HCT116 (cell line): ENCODE measurements at regions of chr4 and their contacts with region 1.

Region 1: DNA sequence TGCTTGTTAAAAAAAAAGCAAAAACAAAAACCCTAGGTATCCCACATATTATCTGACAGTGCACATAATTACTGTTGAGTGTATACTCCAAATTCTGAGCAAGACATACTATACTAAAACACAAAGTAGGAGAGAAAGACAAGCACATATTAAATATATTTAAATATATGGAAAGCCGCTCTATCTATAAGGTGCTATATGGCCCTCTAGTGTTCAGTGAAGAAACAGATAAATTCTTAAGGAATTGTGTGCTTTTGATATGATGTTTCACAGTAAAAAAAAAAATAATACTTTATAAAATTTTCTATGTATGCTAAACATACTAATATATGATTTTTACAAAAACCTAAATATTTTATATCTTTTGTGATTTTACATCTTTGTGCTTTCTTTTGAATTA is 137.8 kb downstream of the FBXW7 start:
- DNase-seq: no peak
- ATAC-seq: no peak
- H3K4me3 ChIP-seq: no peak overlapping the region
- H3K27ac ChIP-seq: no peak overlapping the region
- H3K4me1 ChIP-seq: no peaks in the 10 kb centered on the region
- H3K27me3 ChIP-seq: no peaks in the 10 kb centered on the region
- CTCF ChIP-seq: peak; percentile 29 to 40 (median 37); a peak in 4 of 6 replicates
- POLR2A ChIP-seq: no peak
- RAD21 ChIP-seq: peak; percentile 47

Region 2: GRCh38 chr4:151530783-151531182 is 867.3 kb before region 1 on chr4:
- CTCF ChIA-PET with region 1: no interaction called
- POLR2A ChIA-PET with region 1: no interaction called
- RAD21 ChIA-PET with region 1: no interaction called
- intact Hi-C with region 1: loop called (anchors 10 kb)
- DNase-seq: no peak
- ATAC-seq: peak; percentile 66
- H3K4me3 ChIP-seq: no peak overlapping the region
- H3K27ac ChIP-seq: no peak overlapping the region
- H3K4me1 ChIP-seq: no peaks in the 10 kb centered on the region
- H3K27me3 ChIP-seq: no peaks in the 10 kb centered on the region
- CTCF ChIP-seq: peak; percentile 30 to 53 (median 40); a peak in 4 of 6 replicates
- POLR2A ChIP-seq: no peak
- RAD21 ChIP-seq: peak; percentile 57